ENCODE measurements at regions of chr19 and their contacts with region 1.

Region 1: GRCh38 chr19:9818734-9819589 is at the start of gene FBXL12:
- DNase-seq: peak; percentile 100
- ATAC-seq: peak; percentile 89
- H3K4me3 ChIP-seq: peak within 1 kb of the TSS; percentile 97 to 100
- H3K4me3 Mint-ChIP-seq: peak within 1 kb of the TSS; percentile 88
- H3K27ac ChIP-seq: peak within 1 kb of the TSS; percentile 98 to 99
- H3K27ac Mint-ChIP-seq: peak within 1 kb of the TSS; percentile 93
- H3K4me1 ChIP-seq: peaks cover 18% of the 10 kb centered on the region
- H3K4me1 Mint-ChIP-seq: peaks cover 38% of the 10 kb centered on the region
- H3K27me3 ChIP-seq: no peaks in the 10 kb centered on the region
- H3K27me3 Mint-ChIP-seq: no peaks in the 10 kb centered on the region
- CTCF ChIP-seq: no peak
- total RNA-seq, gene FBXL12: 38.9 to 41.3 TPM

Region 2: DNA sequence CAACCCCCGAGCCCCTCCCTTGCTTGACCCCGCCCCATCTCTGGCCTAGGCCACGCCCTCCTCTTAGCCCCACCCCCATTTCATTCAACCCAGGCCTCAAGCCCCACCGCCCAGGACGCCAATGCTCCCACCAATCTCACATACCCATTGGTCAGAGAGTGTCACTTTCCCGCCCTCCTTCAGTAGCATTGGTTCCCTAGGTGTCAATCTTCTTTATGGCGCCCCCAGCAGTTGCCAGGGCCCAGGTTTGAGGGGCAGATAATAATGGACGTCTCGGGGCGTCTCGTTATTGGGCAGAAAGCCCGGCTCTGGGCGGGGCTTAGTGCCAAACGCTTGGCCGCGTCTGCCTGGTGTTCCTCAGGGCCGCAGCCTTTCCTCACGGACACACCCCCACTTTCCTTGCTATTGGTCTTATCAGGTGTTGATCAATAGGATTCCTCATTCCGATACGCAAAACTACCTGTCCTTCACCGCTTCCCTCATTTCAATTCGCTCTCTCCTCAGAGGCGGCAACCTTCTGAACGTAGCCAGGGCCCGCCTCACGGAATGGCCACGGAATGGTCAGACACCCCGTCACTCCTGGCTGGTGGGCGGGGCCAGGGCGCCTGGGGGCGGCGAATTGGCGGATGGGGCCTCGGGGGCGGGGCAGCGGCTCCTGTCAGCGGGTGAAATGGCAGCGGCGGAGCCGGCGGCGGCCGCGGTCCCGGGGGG is 1989.2 kb before region 1 on chr19 and contains the start of gene EVI5L:
- CTCF ChIA-PET with region 1: no interaction called
- POLR2A ChIA-PET with region 1: no interaction called
- intact Hi-C with region 1: loop called in 1 of 2 experiments (anchors 5 kb)
- DNase-seq: peak; percentile 99 to 100 (median 100)
- ATAC-seq: peak; percentile 82
- H3K4me3 ChIP-seq: peak within 1 kb of the TSS; percentile 44 to 45
- H3K4me3 Mint-ChIP-seq: peak within 1 kb of the TSS; percentile 80
- H3K27ac ChIP-seq: peak within 1 kb of the TSS in 1 of 2 experiments; percentile 66
- H3K27ac Mint-ChIP-seq: peak within 1 kb of the TSS; percentile 83
- H3K4me1 ChIP-seq: peaks cover 13% of the 10 kb centered on the region
- H3K4me1 Mint-ChIP-seq: peaks cover 16% of the 10 kb centered on the region
- H3K27me3 ChIP-seq: no peaks in the 10 kb centered on the region
- H3K27me3 Mint-ChIP-seq: no peaks in the 10 kb centered on the region
- CTCF ChIP-seq: no peak
- total RNA-seq, gene EVI5L: 4.1 to 4.2 TPM

Region 3: DNA sequence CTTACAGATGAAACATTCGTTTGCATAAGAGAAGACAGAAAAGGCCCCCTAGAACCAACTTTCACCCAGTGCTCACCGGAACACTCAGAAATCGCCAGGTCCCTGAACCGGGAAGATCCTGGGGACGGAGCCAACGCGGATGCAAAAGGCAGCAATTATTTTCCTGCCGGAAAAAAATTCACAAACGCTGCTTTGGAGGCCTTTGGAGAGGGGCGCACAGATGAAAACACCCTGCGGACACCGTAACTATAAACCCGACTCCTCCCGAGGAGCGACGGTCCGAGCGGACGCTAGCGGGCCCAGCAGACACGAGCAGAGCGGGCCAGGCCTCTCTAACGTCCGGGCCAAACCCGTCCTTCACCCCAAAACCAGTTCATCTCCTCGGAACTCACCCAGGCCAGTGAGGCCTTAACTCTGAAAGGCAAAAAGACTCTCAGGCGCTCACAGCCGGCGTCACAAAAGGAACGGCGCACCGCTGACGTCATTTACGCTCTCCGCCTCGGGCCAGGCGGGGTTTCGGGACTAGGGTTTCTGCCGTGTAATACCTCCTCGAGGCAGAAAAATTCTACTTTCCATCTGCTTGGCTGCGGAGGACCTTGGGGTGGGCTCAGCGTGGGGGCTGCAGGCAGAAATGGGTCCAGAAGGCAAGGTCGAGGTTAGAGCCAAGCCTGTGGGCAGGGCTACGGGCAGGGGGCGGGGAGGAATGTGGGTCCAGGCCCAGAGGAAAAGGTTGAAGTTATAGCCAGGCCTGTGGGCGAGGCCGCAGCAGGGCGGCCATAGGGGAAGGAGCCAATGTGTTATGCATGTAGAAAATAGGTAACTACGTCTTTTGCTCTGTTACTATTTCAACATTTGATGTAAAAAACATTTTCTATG is 280.5 kb before region 1 on chr19 and contains the start of gene ZNF426:
- CTCF ChIA-PET with region 1: no interaction called
- POLR2A ChIA-PET with region 1: no interaction called
- intact Hi-C with region 1: loop called in 1 of 2 experiments (anchors 1 kb)
- DNase-seq: peak; percentile 77 to 92 (median 86)
- ATAC-seq: peak; percentile 94
- H3K4me3 ChIP-seq: peak within 1 kb of the TSS; percentile 89 to 93
- H3K4me3 Mint-ChIP-seq: peak within 1 kb of the TSS; percentile 99
- H3K27ac ChIP-seq: peak within 1 kb of the TSS; percentile 91
- H3K27ac Mint-ChIP-seq: peak within 1 kb of the TSS; percentile 100
- H3K4me1 ChIP-seq: peaks cover 17% of the 10 kb centered on the region
- H3K4me1 Mint-ChIP-seq: peaks cover 35% of the 10 kb centered on the region
- H3K27me3 ChIP-seq: no peaks in the 10 kb centered on the region
- H3K27me3 Mint-ChIP-seq: no peaks in the 10 kb centered on the region
- CTCF ChIP-seq: no peak
- total RNA-seq, gene ZNF426: 16.6 to 17.9 TPM

Region 4: GRCh38 chr19:9674663-9675357 is 144.2 kb before region 1 on chr19 and contains the start of gene ZNF562:
- CTCF ChIA-PET with region 1: no interaction called
- POLR2A ChIA-PET with region 1: no interaction called
- intact Hi-C with region 1: loop called in 1 of 2 experiments (anchors 1 kb)
- DNase-seq: peak; percentile 60 to 89 (median 81)
- ATAC-seq: peak; percentile 81
- H3K4me3 ChIP-seq: peak within 1 kb of the TSS; percentile 65 to 90
- H3K4me3 Mint-ChIP-seq: peak within 1 kb of the TSS; percentile 97
- H3K27ac ChIP-seq: peak within 1 kb of the TSS; percentile 80 to 84
- H3K27ac Mint-ChIP-seq: peak within 1 kb of the TSS; percentile 99
- H3K4me1 ChIP-seq: no peaks in the 10 kb centered on the region
- H3K4me1 Mint-ChIP-seq: peaks cover 23% of the 10 kb centered on the region
- H3K27me3 ChIP-seq: no peaks in the 10 kb centered on the region
- H3K27me3 Mint-ChIP-seq: no peaks in the 10 kb centered on the region
- CTCF ChIP-seq: no peak
- total RNA-seq, gene ZNF562: 13.6 to 16.5 TPM

Region 5: DNA sequence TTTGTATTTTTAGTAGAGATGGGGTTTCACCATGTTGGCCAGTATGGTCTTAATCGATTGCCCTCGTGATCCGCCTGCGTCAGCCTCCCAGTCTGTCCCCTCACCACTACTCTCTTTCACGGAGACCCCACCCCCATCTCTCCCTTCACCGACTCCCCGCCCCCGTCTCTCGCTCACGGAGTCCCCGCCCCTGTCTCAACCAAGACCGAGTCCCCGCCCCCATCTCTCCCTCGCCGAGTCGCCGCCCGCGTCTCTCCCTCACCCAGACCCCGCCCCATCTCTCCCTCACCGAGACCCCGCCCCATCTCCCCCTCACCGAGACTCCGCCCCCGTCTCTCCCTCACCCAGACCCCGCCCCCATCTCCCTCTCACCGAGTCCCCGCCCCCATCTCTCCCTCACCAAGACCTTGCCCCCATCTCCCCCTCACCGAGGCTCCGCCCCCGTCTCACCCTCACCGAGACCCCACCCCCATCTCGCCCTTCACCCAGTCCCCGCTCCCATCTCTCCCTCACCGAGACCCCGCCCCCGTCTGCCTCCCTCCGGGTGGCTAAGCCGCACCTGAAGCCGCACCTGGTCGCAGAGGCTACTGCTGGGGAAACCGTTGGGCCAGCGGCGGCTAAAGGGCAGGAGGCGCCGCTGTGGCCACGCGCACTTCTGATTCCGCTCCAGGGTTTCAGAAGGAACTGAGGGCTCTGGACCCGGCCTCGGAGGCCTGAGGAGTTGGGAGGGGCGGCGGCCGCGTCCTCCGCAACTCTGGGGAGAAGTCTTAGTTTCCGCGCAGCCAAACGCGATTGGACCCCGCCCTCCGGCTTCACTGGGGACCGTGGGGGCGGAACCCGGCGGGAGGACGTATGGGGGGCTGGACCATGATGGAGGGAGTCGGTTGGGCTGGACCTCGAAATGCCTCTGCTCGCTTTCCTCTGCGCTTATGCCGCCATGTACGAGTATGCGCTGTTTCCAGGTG is 33.3 kb before region 1 on chr19:
- CTCF ChIA-PET with region 1: no interaction called
- POLR2A ChIA-PET with region 1: no interaction called
- intact Hi-C with region 1: loop called (anchors 1 kb)
- DNase-seq: peak; percentile 90 to 98 (median 97)
- ATAC-seq: peak; percentile 82
- H3K4me3 ChIP-seq: peak overlapping the region; percentile 95 to 97
- H3K4me3 Mint-ChIP-seq: peak overlapping the region; percentile 88
- H3K27ac ChIP-seq: peak overlapping the region; percentile 87 to 98
- H3K27ac Mint-ChIP-seq: peak overlapping the region; percentile 95
- H3K4me1 ChIP-seq: peaks cover 10% of the 10 kb centered on the region
- H3K4me1 Mint-ChIP-seq: peaks cover 29% of the 10 kb centered on the region
- H3K27me3 ChIP-seq: no peaks in the 10 kb centered on the region
- H3K27me3 Mint-ChIP-seq: no peaks in the 10 kb centered on the region
- CTCF ChIP-seq: no peak